ENCODE measurements at regions of chr1 and their contacts with region 1.

Region 1: GRCh38 chr1:174874331-174875053 is 125.3 kb upstream of the CACYBP start:
- DNase-seq: peak; percentile 76
- H3K4me3 ChIP-seq: peak overlapping the region; percentile 72
- H3K27ac ChIP-seq: peak overlapping the region; percentile 89
- H3K4me1 ChIP-seq: peaks cover 70% of the 10 kb centered on the region
- CTCF ChIP-seq: no peak

Region 2: GRCh38 chr1:174276087-174276486 is 598.4 kb before region 1 on chr1:
- CTCF ChIA-PET with region 1: no interaction called
- POLR2A ChIA-PET with region 1: interaction called, 3 read pairs
- intact Hi-C with region 1: loop called (anchors 5 kb)
- DNase-seq: peak; percentile 95
- H3K4me3 ChIP-seq: peak overlapping the region; percentile 43
- H3K27ac ChIP-seq: peak overlapping the region; percentile 96
- H3K4me1 ChIP-seq: peaks cover 91% of the 10 kb centered on the region
- CTCF ChIP-seq: no peak

Region 3: DNA sequence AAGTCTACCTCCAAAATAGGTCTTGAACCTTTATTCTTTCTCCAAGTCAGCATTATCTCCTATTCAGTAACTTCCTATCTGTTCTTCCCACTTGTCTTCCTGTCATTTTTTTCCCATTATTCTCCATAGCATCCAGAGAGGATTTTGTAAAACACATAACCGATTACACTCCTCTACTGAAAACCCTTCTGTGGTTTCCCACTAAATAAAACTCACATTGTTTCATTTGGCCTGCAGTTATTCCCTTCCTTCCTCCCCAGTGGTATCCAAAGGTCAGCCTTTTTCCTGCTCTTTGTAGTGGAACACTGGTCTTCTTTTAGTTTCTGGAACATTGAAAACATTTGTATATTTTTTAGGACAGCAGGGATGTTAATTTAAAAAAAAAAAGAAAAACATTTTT is 160.7 kb before region 1 on chr1:
- CTCF ChIA-PET with region 1: no interaction called
- POLR2A ChIA-PET with region 1: no interaction called
- intact Hi-C with region 1: no loop called
- DNase-seq: no peak
- H3K4me3 ChIP-seq: no peak overlapping the region
- H3K27ac ChIP-seq: no peak overlapping the region
- H3K4me1 ChIP-seq: peaks cover 3% of the 10 kb centered on the region
- CTCF ChIP-seq: no peak

Region 4: DNA sequence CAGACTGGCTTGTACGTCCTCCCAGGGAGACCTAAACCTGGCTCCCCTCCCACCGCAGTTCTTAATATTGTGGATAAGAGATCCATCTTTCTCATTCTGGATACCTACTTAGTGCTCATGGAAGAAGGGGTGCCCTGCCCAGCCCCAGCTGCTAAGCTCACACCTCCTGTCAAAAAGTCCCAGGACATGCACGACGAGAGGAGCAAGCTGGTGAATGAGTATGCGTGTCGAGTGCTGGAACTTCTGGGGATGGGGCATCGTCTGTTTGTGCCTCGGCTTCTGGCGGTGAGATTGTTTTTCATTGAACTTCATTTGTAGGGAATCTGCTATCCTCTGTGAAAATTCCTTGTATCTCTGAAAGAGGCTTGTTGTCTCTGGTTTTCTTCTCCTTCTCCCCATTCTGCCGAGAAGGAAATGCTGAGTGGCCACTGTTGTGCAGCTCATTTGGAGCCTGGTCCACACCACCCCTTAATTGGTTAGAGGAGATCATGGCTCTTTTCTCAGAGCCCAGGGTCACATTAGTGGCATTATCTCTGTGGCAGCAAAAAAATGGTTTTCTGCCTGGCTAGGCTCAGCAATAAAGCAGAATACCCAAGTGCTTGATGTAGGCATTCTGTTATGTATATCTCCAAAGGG is 74.2 kb before region 1 on chr1:
- CTCF ChIA-PET with region 1: interaction called, 5 read pairs
- POLR2A ChIA-PET with region 1: interaction called, 9 read pairs
- intact Hi-C with region 1: loop called (anchors 5 kb)
- DNase-seq: peak; percentile 24
- H3K4me3 ChIP-seq: peak overlapping the region; percentile 74
- H3K27ac ChIP-seq: peak overlapping the region; percentile 76
- H3K4me1 ChIP-seq: peaks cover 38% of the 10 kb centered on the region
- CTCF ChIP-seq: no peak

Region 5: DNA sequence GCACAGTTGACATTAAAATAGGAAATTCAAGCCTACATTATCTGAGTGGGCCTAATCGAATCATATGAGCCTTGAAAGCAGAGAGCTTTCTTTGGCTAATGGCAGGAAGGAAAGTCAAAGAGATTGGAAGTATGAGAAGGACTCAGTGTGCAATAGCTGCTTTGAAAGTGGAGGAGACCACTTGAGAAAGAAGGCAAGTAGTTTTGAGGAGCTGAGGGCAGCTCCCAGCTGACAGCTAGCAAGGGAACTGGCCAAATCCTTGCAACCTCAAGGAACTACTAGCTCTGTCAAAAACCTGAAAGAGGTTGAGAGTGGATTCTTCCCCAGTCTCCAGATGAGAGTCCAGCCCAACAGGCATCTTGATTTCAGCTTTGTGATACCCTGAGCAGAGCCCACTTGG is 23.8 kb before region 1 on chr1:
- CTCF ChIA-PET with region 1: no interaction called
- POLR2A ChIA-PET with region 1: interaction called, 11 read pairs
- intact Hi-C with region 1: no loop called
- DNase-seq: no peak
- H3K4me3 ChIP-seq: no peak overlapping the region
- H3K27ac ChIP-seq: no peak overlapping the region
- H3K4me1 ChIP-seq: no peaks in the 10 kb centered on the region
- CTCF ChIP-seq: no peak

Region 6: GRCh38 chr1:174963529-174964125 is 89.1 kb after region 1 on chr1:
- CTCF ChIA-PET with region 1: interaction called, 3 read pairs
- POLR2A ChIA-PET with region 1: interaction called, 23 read pairs
- intact Hi-C with region 1: loop called (anchors 1 kb)
- DNase-seq: peak; percentile 90
- H3K4me3 ChIP-seq: peak overlapping the region; percentile 63
- H3K27ac ChIP-seq: peak overlapping the region; percentile 93
- H3K4me1 ChIP-seq: peaks cover 71% of the 10 kb centered on the region
- CTCF ChIP-seq: no peak

Region 7: DNA sequence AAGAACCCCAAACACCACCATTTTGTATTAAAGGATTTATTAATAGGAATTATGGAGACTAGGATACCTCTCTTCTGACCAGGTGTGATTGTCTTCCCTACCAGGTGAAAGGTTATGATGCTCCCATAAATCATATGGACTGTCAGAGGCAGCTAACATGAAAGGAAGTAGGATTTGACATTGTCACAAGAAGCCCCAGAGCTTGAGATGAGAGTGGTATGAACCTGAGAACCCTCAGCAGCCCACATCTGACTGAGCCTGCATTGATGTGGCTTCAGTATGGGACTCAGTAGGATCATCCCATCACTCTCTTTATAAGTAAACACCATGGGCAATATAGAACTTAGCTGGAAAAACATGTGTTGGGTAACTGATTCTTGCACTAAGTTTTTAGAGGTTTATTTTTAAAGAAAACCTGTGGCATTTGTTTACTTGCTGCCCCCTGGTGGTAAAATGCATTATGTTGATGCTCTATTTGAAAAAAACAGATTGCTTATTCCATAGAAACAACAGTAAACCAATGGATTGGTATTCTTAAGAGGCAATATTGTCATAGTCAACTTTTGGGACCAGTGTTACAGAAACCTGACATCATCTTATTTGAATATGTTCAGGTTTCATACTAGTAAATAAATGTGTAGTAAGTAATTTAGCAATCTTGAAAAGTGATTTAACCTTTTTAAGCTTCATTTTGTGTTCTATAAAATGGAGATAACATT is 108.6 kb after region 1 on chr1:
- CTCF ChIA-PET with region 1: no interaction called
- POLR2A ChIA-PET with region 1: interaction called, 7 read pairs
- intact Hi-C with region 1: loop called (anchors 5 kb)
- DNase-seq: peak; percentile 76
- H3K4me3 ChIP-seq: no peak overlapping the region
- H3K27ac ChIP-seq: peak overlapping the region; percentile 14
- H3K4me1 ChIP-seq: peaks cover 7% of the 10 kb centered on the region
- CTCF ChIP-seq: peak; percentile 98

Measured in OCI-LY7 (cell line).